HepG2 (cell line): ENCODE measurements at regions of chr2 and their contacts with region 1.

Region 1: GRCh38 chr2:224357098-224357901 is 44.6 kb downstream of the FAM124B start:
- DNase-seq: peak; percentile 58
- ATAC-seq: peak; percentile 86
- H3K4me3 ChIP-seq: no peak overlapping the region
- H3K27ac ChIP-seq: no peak overlapping the region
- H3K4me1 ChIP-seq: no peaks in the 10 kb centered on the region
- H3K27me3 ChIP-seq: peaks cover 0 to 10% of the 10 kb centered on the region in 2 experiments; a peak in 2 of 5 replicates
- CTCF ChIP-seq: peak; percentile 90
- EP300 ChIP-seq: no peak
- POLR2A ChIP-seq: no peak
- RAD21 ChIP-seq: peak; percentile 65

Region 2: GRCh38 chr2:222494104-222494739 is 1863.1 kb before region 1 on chr2:
- CTCF ChIA-PET with region 1: no interaction called
- POLR2A ChIA-PET with region 1: no interaction called
- in situ Hi-C with region 1: no loop called
- intact Hi-C with region 1: no loop called
- DNase-seq: no peak
- ATAC-seq: no peak
- H3K4me3 ChIP-seq: no peak overlapping the region
- H3K27ac ChIP-seq: no peak overlapping the region
- H3K4me1 ChIP-seq: peaks cover 8% of the 10 kb centered on the region
- H3K27me3 ChIP-seq: peaks cover 0 to 4% of the 10 kb centered on the region in 2 experiments; a peak in 1 of 5 replicates
- CTCF ChIP-seq: no peak
- EP300 ChIP-seq: no peak
- POLR2A ChIP-seq: no peak
- RAD21 ChIP-seq: no peak

Region 3: DNA sequence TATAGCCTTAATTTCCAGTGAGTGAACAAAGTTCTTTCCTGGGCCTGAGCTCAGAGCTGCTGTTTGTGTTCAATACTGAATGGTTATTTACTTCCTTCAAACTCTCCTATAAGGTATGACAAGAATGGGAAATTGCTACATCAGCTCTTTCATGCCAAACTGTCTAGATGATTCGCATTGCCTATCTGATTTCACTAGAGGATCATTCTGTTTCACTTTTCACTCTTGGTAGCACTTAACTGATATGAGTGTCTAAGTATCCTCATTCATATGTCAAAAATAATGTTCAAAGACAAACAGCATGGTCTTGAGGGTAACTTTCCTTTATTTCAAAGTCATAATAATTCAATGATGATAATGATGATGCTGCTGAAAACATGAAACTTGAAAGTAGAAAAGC is 722.2 kb before region 1 on chr2:
- CTCF ChIA-PET with region 1: no interaction called
- POLR2A ChIA-PET with region 1: no interaction called
- in situ Hi-C with region 1: no loop called
- intact Hi-C with region 1: no loop called
- DNase-seq: no peak
- ATAC-seq: no peak
- H3K4me3 ChIP-seq: no peak overlapping the region
- H3K27ac ChIP-seq: no peak overlapping the region
- H3K4me1 ChIP-seq: peaks cover 6% of the 10 kb centered on the region; the same call in 1 of the 2 replicates
- H3K27me3 ChIP-seq: no peaks in the 10 kb centered on the region
- CTCF ChIP-seq: no peak
- EP300 ChIP-seq: no peak
- POLR2A ChIP-seq: no peak
- RAD21 ChIP-seq: no peak

Region 4: DNA sequence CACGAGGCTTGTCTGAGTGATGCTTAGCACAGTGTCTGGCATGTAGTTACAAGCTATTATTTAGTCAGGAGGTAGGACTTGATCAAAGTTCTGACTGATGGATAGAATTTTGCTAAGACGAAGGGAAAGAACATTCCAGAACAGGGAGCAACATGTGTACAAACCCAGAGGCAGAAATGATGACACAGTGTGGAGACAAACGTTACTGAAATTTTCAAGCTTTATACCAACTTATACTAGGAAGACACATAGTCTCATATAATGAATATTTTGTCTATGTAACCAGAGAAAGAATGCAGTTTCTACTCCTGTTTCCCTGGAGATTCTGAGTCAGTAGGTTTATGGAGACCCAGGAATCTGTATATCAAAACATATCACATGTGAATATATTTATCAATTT is 78.8 kb before region 1 on chr2:
- CTCF ChIA-PET with region 1: no interaction called
- POLR2A ChIA-PET with region 1: no interaction called
- in situ Hi-C with region 1: no loop called
- intact Hi-C with region 1: no loop called
- DNase-seq: no peak
- ATAC-seq: no peak
- H3K4me3 ChIP-seq: no peak overlapping the region
- H3K27ac ChIP-seq: no peak overlapping the region
- H3K4me1 ChIP-seq: 0 out of 2 replicates have a peak, but pooled peaks cover 5% of the 10 kb centered on the region
- H3K27me3 ChIP-seq: no peaks in the 10 kb centered on the region
- CTCF ChIP-seq: no peak
- EP300 ChIP-seq: no peak
- POLR2A ChIP-seq: no peak
- RAD21 ChIP-seq: no peak

Region 5: GRCh38 chr2:224442071-224442967 is 85.0 kb after region 1 on chr2:
- CTCF ChIA-PET with region 1: no interaction called
- POLR2A ChIA-PET with region 1: no interaction called
- in situ Hi-C with region 1: loop called (anchors 5 kb)
- intact Hi-C with region 1: no loop called
- DNase-seq: no peak
- ATAC-seq: peak; percentile 69
- H3K4me3 ChIP-seq: peak overlapping the region; percentile 46 to 77 (median 58)
- H3K27ac ChIP-seq: no peak overlapping the region
- H3K4me1 ChIP-seq: peaks cover 13% of the 10 kb centered on the region; the same call in 1 of the 2 replicates
- H3K27me3 ChIP-seq: peaks cover 3 to 28% of the 10 kb centered on the region in 2 experiments; a peak in 4 of 5 replicates
- CTCF ChIP-seq: no peak
- EP300 ChIP-seq: no peak
- POLR2A ChIP-seq: no peak
- RAD21 ChIP-seq: no peak

Region 6: DNA sequence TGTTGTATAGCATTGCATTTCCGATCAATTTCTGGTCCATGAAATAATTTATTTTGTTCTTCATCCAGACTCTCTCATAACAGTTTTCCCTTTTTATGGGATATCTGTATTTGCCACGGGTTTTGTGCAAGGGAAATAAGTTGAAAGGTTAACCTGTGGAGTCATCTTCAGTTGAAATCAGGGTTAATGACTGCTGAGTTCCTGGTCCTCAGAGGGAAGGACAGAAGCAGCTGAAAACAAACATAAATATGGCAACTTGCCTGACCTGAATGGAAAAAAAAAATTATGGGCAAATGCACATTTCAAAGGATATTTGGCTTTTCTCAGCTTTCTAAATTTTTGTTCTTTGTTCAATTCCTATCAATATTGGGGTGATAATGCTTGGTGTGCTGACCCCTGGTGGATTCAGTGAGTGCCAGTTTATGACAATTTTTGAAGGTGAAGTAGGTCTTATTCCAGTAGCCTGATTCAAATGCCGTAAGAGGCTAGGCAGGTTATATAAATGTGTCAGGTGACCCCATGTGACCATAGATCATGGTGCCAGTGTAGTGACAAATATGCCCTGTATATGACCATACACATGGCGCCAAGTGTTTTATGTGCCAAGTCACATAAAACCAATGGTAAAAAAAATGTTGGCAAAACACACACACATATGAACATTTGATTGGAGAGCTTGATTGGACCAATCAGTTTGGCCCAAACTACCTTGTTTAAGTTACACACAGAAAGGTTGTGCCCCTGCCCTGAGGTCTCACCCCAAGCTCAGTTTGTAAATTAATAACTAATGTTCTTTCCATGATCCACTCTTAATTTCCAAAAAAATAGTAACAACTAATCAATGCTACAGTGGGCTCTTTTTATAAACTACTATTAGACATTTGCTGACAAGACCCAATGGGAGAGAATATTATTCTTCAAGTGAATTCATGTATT is 92.2 kb after region 1 on chr2:
- CTCF ChIA-PET with region 1: interaction called, 8 read pairs
- POLR2A ChIA-PET with region 1: no interaction called
- in situ Hi-C with region 1: loop called (anchors 5 kb)
- intact Hi-C with region 1: loop called (anchors 1 kb)
- DNase-seq: peak; percentile 44
- ATAC-seq: peak; percentile 83
- H3K4me3 ChIP-seq: no peak overlapping the region
- H3K27ac ChIP-seq: no peak overlapping the region
- H3K4me1 ChIP-seq: no peaks in the 10 kb centered on the region
- H3K27me3 ChIP-seq: no peaks in the 10 kb centered on the region
- CTCF ChIP-seq: peak; percentile 59
- EP300 ChIP-seq: no peak
- POLR2A ChIP-seq: no peak
- RAD21 ChIP-seq: peak; percentile 39; the same call in 1 of the 2 replicates

Region 7: GRCh38 chr2:224778474-224778877 is 421.2 kb after region 1 on chr2:
- CTCF ChIA-PET with region 1: interaction called, 22 read pairs
- POLR2A ChIA-PET with region 1: no interaction called
- in situ Hi-C with region 1: loop called (anchors 5 kb)
- intact Hi-C with region 1: loop called (anchors 1 kb)
- DNase-seq: peak; percentile 56
- ATAC-seq: peak; percentile 73
- H3K4me3 ChIP-seq: no peak overlapping the region
- H3K27ac ChIP-seq: no peak overlapping the region
- H3K4me1 ChIP-seq: no peaks in the 10 kb centered on the region
- H3K27me3 ChIP-seq: no peaks in the 10 kb centered on the region
- CTCF ChIP-seq: peak; percentile 75
- EP300 ChIP-seq: no peak
- POLR2A ChIP-seq: no peak
- RAD21 ChIP-seq: peak; percentile 39; the same call in 1 of the 2 replicates